ENCODE measurements at regions of chr15 and their contacts with region 1.

Region 1: GRCh38 chr15:91271565-91272153 is 171.6 kb downstream of the SV2B start:
- DNase-seq: peak; percentile 19
- ATAC-seq: peak; percentile 88
- H3K4me3 ChIP-seq: no peak overlapping the region
- H3K27ac ChIP-seq: no peak overlapping the region
- H3K4me1 ChIP-seq: no peaks in the 10 kb centered on the region
- H3K27me3 ChIP-seq: no peaks in the 10 kb centered on the region; a peak in 1 of 4 replicates
- CTCF ChIP-seq: peak; percentile 70 to 86 (median 72)
- EP300 ChIP-seq: no peak
- POLR2A ChIP-seq: no peak
- RAD21 ChIP-seq: peak; percentile 94

Region 2: DNA sequence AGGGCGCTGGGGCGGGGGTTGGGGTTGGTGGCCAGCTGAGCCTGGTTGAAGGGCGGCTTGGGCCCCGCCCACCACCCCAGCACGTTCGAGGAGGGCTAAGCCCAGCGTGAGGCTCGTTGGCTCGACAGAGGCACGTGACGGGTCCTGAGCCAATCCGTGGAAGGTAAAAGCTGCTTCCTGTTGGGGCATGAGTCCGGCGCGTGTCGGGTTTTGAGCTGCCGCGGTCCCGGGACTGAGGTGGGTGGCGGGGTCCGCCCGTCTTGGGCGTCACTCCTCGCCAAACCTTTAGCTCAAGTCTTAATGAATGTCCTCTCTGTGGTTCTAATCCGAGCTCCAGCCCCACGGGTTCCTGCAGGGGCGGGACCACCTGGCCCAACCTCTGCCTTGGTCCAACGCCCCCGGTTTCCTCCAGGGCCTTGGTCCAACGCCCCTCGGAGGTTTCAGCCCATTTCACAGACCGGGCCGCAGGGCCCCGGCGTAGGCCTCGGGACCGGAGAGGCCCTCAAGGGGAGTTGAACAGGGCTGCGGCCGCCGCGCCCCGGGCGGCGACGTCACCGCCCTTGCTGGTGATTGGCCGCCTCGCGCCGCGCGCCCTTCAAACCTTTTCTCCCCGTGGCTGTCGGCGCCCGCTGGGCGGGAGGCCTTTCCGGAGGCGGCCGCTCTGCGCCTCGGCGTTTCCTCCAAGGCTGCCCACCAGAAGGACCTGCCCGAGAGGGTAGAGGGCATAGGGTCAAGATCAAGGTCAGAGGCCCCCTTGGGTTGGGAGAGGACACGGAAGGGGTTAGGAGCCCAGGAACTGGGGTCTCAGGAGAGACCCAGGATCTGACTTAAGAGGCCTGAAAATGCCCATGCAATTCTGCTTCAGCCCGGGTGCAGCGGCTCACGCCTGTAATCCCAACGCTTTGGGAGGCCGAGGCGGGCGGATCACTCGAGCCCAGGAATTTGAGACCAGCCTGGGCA is 316.7 kb before region 1 on chr15 and contains the start of gene RCCD1:
- CTCF ChIA-PET with region 1: interaction called, 8 read pairs
- POLR2A ChIA-PET with region 1: no interaction called
- RAD21 ChIA-PET with region 1: interaction called, 3 read pairs
- SMC1A ChIA-PET with region 1: interaction called, 3 read pairs
- in situ Hi-C with region 1: no loop called
- intact Hi-C with region 1: loop called (anchors 1 kb)
- DNase-seq: peak; percentile 91
- ATAC-seq: peak; percentile 98
- H3K4me3 ChIP-seq: peak within 1 kb of the TSS; percentile 87
- H3K27ac ChIP-seq: peak within 1 kb of the TSS; percentile 98
- H3K4me1 ChIP-seq: peaks cover 3% of the 10 kb centered on the region; the same call in 1 of the 2 replicates
- H3K27me3 ChIP-seq: no peaks in the 10 kb centered on the region
- CTCF ChIP-seq: no peak
- EP300 ChIP-seq: no peak; a peak in 1 of 4 replicates
- POLR2A ChIP-seq: peak; percentile 93
- RAD21 ChIP-seq: no peak
- polyA plus RNA-seq, gene RCCD1: 5.2 to 8.0 TPM

Region 3: GRCh38 chr15:91049378-91050127 is 222.1 kb before region 1 on chr15:
- CTCF ChIA-PET with region 1: interaction called, 111 read pairs
- POLR2A ChIA-PET with region 1: no interaction called
- RAD21 ChIA-PET with region 1: interaction called, 7 read pairs
- SMC1A ChIA-PET with region 1: interaction called, 51 read pairs
- in situ Hi-C with region 1: no loop called
- intact Hi-C with region 1: no loop called
- DNase-seq: peak; percentile 12
- ATAC-seq: peak; percentile 96
- H3K4me3 ChIP-seq: no peak overlapping the region
- H3K27ac ChIP-seq: no peak overlapping the region
- H3K4me1 ChIP-seq: no peaks in the 10 kb centered on the region; the same call in 1 of the 2 replicates
- H3K27me3 ChIP-seq: no peaks in the 10 kb centered on the region; a peak in 2 of 4 replicates
- CTCF ChIP-seq: peak; percentile 68 to 72 (median 69)
- EP300 ChIP-seq: no peak
- POLR2A ChIP-seq: no peak
- RAD21 ChIP-seq: peak; percentile 77

Region 4: GRCh38 chr15:91224755-91225380 is 46.8 kb before region 1 on chr15:
- CTCF ChIA-PET with region 1: interaction called, 25 read pairs
- POLR2A ChIA-PET with region 1: no interaction called
- RAD21 ChIA-PET with region 1: interaction called, 5 read pairs
- SMC1A ChIA-PET with region 1: interaction called, 3 read pairs
- in situ Hi-C with region 1: no loop called
- intact Hi-C with region 1: no loop called
- DNase-seq: peak; percentile 5
- ATAC-seq: peak; percentile 44; the same call in 2 of the 3 replicates
- H3K4me3 ChIP-seq: no peak overlapping the region
- H3K27ac ChIP-seq: no peak overlapping the region
- H3K4me1 ChIP-seq: no peaks in the 10 kb centered on the region
- H3K27me3 ChIP-seq: no peaks in the 10 kb centered on the region; a peak in 1 of 4 replicates
- CTCF ChIP-seq: peak; percentile 74 to 82 (median 79)
- EP300 ChIP-seq: no peak
- POLR2A ChIP-seq: no peak
- RAD21 ChIP-seq: peak; percentile 89

Region 5: DNA sequence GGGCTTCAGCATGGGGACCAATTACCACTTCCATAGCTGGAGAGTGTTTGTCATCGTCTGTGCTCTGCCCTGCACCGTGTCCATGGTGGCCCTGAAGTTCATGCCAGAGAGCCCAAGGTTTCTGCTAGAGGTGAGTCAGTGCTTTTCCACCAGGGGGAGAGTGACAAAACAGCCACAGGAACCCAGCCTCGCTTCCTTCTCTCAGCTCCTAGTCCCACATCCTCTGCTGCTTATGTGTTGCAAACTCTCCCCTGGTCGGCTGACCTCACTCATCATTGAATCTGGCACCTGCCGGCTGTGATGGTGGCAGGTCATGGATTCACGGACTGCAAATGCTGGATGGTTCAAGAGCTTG is 13.3 kb before region 1 on chr15:
- CTCF ChIA-PET with region 1: interaction called, 42 read pairs
- POLR2A ChIA-PET with region 1: no interaction called
- RAD21 ChIA-PET with region 1: interaction called, 7 read pairs
- SMC1A ChIA-PET with region 1: interaction called, 20 read pairs
- in situ Hi-C with region 1: no loop called
- intact Hi-C with region 1: no loop called
- DNase-seq: no peak
- ATAC-seq: 0 out of 3 replicates have a peak, but pooled peaks have one; percentile 21
- H3K4me3 ChIP-seq: no peak overlapping the region
- H3K27ac ChIP-seq: no peak overlapping the region
- H3K4me1 ChIP-seq: no peaks in the 10 kb centered on the region
- H3K27me3 ChIP-seq: peaks cover 0 to 3% of the 10 kb centered on the region in 2 experiments; a peak in 2 of 4 replicates
- CTCF ChIP-seq: no peak
- EP300 ChIP-seq: no peak
- POLR2A ChIP-seq: no peak
- RAD21 ChIP-seq: no peak

Region 6: GRCh38 chr15:91357011-91357410 is 85.4 kb after region 1 on chr15:
- CTCF ChIA-PET with region 1: no interaction called
- POLR2A ChIA-PET with region 1: no interaction called
- RAD21 ChIA-PET with region 1: no interaction called
- SMC1A ChIA-PET with region 1: no interaction called
- in situ Hi-C with region 1: no loop called
- intact Hi-C with region 1: no loop called
- DNase-seq: no peak
- ATAC-seq: no peak
- H3K4me3 ChIP-seq: no peak overlapping the region
- H3K27ac ChIP-seq: no peak overlapping the region
- H3K4me1 ChIP-seq: no peaks in the 10 kb centered on the region
- H3K27me3 ChIP-seq: no peaks in the 10 kb centered on the region; a peak in 3 of 4 replicates
- CTCF ChIP-seq: no peak
- EP300 ChIP-seq: no peak
- POLR2A ChIP-seq: no peak
- RAD21 ChIP-seq: no peak

Region 7: GRCh38 chr15:91426412-91426811 is 154.8 kb after region 1 on chr15:
- CTCF ChIA-PET with region 1: no interaction called
- POLR2A ChIA-PET with region 1: no interaction called
- RAD21 ChIA-PET with region 1: no interaction called
- SMC1A ChIA-PET with region 1: no interaction called
- in situ Hi-C with region 1: no loop called
- intact Hi-C with region 1: no loop called
- DNase-seq: no peak
- ATAC-seq: no peak
- H3K4me3 ChIP-seq: no peak overlapping the region
- H3K27ac ChIP-seq: no peak overlapping the region
- H3K4me1 ChIP-seq: no peaks in the 10 kb centered on the region
- H3K27me3 ChIP-seq: no peaks in the 10 kb centered on the region; a peak in 1 of 4 replicates
- CTCF ChIP-seq: no peak
- EP300 ChIP-seq: no peak
- POLR2A ChIP-seq: no peak
- RAD21 ChIP-seq: no peak

Measured in GM12878 (cell line).